K562 (cell line): ENCODE measurements at regions of chr1 and their contacts with region 1.

Region 1: DNA sequence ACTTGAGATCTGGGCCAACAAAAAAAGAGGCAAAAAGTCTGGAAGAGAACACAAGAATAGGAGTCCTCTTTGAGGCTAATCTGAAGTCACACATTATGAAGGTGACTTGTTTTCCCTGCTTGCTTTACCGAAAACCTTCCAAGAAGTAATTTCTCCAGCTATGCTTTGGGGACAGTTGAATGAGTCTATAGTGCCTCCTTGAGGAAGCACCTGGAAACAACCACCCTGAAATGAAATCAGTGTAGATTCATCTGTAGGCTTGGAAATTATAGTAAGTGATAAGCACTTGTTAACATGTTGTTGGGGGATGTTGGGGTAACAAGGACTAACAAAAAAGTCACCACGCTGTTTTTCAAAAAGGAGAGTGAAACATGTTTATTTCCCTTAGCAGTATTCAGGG is 23.4 kb upstream of the RPTN start:
- DNase-seq: peak in 1 of 4 experiments; percentile 14
- ATAC-seq: peak; percentile 41; the same call in 1 of the 3 replicates
- H3K4me3 ChIP-seq: no peak overlapping the region
- H3K27ac ChIP-seq: no peak overlapping the region
- H3K4me1 ChIP-seq: no peaks in the 10 kb centered on the region
- H3K27me3 ChIP-seq: no peaks in the 10 kb centered on the region
- CTCF ChIP-seq: peak; percentile 55 to 76 (median 62); a peak in 5 of 6 replicates
- EP300 ChIP-seq: no peak
- POLR2A ChIP-seq: no peak
- RAD21 ChIP-seq: peak; percentile 88 to 90

Region 2: DNA sequence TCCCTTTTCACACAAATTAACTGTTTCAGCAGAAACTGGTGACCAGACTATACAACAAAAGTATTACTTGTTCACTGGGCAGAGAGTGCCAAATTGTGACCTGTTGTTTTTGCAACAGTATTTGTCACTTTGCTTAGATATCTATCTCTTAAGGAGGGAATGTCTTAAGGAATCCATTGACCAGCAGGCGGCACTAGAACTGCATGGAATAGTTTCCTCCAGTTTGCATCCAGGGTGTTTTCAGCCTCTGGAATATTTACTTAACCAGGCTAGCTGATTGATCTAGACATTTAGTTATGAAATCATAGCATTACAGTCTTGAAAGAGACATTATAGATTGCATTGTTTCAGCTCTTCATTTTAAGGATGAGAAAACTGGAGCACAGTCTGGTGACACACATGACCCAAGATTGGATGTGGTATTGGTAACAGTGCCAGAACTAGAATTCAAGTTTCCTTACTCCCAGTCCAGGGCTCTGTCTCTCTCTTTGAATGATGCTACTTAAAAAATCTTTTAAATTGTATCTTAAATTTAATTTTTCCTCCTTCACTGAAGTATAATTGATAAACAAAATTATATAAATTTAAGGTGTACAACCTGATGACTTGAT is 40.4 kb before region 1 on chr1:
- CTCF ChIA-PET with region 1: interaction called, 19 read pairs
- POLR2A ChIA-PET with region 1: no interaction called
- in situ Hi-C with region 1: no loop called
- intact Hi-C with region 1: loop called (anchors 1 kb)
- DNase-seq: peak; percentile 15 to 59 (median 17)
- ATAC-seq: peak; percentile 65; the same call in 2 of the 3 replicates
- H3K4me3 ChIP-seq: no peak overlapping the region
- H3K27ac ChIP-seq: no peak overlapping the region
- H3K4me1 ChIP-seq: no peaks in the 10 kb centered on the region
- H3K27me3 ChIP-seq: no peaks in the 10 kb centered on the region
- CTCF ChIP-seq: peak; percentile 64 to 82 (median 75)
- EP300 ChIP-seq: no peak
- POLR2A ChIP-seq: no peak
- RAD21 ChIP-seq: peak; percentile 79 to 81